ENCODE measurements at regions of chr5 and their contacts with region 1.

Region 1: DNA sequence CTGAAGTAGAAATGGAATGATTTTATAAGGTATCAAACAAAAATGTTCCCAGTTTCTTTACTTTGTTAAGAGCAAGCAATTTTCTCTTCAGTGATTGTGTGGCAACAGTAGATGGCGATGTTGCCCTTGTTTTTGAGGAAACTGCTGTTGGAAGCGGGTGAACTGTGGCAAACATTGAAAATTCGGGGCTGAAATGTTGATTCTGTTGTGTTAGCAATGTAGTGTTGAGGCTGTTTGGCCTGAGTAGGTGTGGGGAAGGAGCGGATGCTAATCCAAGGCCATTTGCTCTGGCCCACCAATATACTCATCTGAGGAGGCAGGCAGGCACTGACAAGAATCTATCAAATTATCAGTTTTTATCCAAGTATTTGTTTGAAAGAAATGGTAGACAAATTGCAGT is 129.8 kb downstream of the SLC12A2 start:
- DNase-seq: peak; percentile 21 to 43 (median 33)
- H3K4me3 ChIP-seq: no peak overlapping the region
- H3K4me3 Mint-ChIP-seq: no peak overlapping the region
- H3K27ac ChIP-seq: no peak overlapping the region
- H3K27ac Mint-ChIP-seq: no peak overlapping the region
- H3K4me1 ChIP-seq: no peaks in the 10 kb centered on the region
- H3K4me1 Mint-ChIP-seq: peaks cover 0 to 4% (median 1%) of the 10 kb centered on the region in 4 donors
- H3K27me3 ChIP-seq: no peaks in the 10 kb centered on the region
- H3K27me3 Mint-ChIP-seq: peaks cover 0 to 1% of the 10 kb centered on the region in 2 donors

Region 2: DNA sequence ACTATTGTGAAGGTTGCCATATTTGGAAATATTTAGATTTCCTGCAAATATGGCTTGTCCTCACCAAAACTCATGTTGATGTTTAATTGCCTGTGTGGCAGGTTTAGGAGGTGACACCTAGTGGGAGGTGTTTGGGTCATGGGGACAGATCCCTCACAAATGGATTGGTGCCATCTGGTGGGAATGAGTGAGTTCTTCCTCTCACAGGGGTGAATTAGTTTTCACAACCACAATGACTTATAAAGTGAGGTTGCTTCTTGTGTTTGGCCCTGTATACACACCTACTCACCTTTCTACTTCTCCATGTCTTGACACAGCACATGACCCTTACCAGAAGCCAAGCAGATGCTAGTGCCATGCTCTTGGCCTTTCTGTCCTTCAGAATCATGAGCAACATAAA is 922.3 kb after region 1 on chr5:
- CTCF ChIA-PET with region 1: no interaction called
- POLR2A ChIA-PET with region 1: no interaction called
- intact Hi-C with region 1: loop called (anchors 5 kb)
- DNase-seq: peak in 4 of 5 donors; percentile 6 to 10 (median 8)
- H3K4me3 ChIP-seq: no peak overlapping the region
- H3K4me3 Mint-ChIP-seq: no peak overlapping the region
- H3K27ac ChIP-seq: no peak overlapping the region
- H3K27ac Mint-ChIP-seq: no peak overlapping the region
- H3K4me1 ChIP-seq: no peaks in the 10 kb centered on the region
- H3K4me1 Mint-ChIP-seq: no peaks in the 10 kb centered on the region
- H3K27me3 ChIP-seq: no peaks in the 10 kb centered on the region
- H3K27me3 Mint-ChIP-seq: peaks cover 0 to 1% of the 10 kb centered on the region in 2 donors